ENCODE measurements at regions of chr1 and their contacts with region 1.

Region 1: GRCh38 chr1:205255941-205256780 is 28.4 kb downstream of the TMCC2 start:
- DNase-seq: peak; percentile 95
- H3K4me3 Mint-ChIP-seq: no peak overlapping the region
- H3K27ac Mint-ChIP-seq: no peak overlapping the region
- H3K4me1 Mint-ChIP-seq: peaks cover 31% of the 10 kb centered on the region
- H3K27me3 Mint-ChIP-seq: no peaks in the 10 kb centered on the region
- CTCF ChIP-seq: peak; percentile 100

Region 2: GRCh38 chr1:204565617-204566582 is 690.3 kb before region 1 on chr1:
- CTCF ChIA-PET with region 1: no interaction called
- POLR2A ChIA-PET with region 1: no interaction called
- intact Hi-C with region 1: loop called (anchors 10 kb)
- DNase-seq: peak; percentile 91
- H3K4me3 Mint-ChIP-seq: no peak overlapping the region
- H3K27ac Mint-ChIP-seq: no peak overlapping the region
- H3K4me1 Mint-ChIP-seq: peaks cover 9% of the 10 kb centered on the region
- H3K27me3 Mint-ChIP-seq: no peaks in the 10 kb centered on the region
- CTCF ChIP-seq: peak; percentile 95

Region 3: DNA sequence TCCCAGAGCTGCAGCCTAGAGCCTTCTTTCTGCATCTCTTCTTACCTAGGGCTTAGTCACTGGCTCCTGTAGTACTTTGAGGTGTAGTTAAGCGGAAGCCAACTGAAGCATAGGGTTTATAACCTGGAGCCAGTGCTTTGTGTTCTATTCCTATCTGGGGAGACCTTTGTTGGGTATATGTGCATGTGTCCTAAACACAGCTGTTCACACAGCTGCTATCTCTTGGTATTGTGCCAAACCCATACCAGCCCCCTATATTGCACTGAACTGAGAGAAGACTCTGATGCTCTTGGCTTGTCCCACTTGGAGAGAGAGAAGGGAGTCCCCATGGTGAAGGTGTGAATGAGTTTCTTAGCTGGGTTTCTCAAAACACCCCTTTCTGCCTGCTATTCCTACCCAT is 402.7 kb before region 1 on chr1:
- CTCF ChIA-PET with region 1: no interaction called
- POLR2A ChIA-PET with region 1: no interaction called
- intact Hi-C with region 1: no loop called
- DNase-seq: no peak
- H3K4me3 Mint-ChIP-seq: no peak overlapping the region
- H3K27ac Mint-ChIP-seq: no peak overlapping the region
- H3K4me1 Mint-ChIP-seq: no peaks in the 10 kb centered on the region
- H3K27me3 Mint-ChIP-seq: peaks cover 69% of the 10 kb centered on the region
- CTCF ChIP-seq: no peak

Region 4: DNA sequence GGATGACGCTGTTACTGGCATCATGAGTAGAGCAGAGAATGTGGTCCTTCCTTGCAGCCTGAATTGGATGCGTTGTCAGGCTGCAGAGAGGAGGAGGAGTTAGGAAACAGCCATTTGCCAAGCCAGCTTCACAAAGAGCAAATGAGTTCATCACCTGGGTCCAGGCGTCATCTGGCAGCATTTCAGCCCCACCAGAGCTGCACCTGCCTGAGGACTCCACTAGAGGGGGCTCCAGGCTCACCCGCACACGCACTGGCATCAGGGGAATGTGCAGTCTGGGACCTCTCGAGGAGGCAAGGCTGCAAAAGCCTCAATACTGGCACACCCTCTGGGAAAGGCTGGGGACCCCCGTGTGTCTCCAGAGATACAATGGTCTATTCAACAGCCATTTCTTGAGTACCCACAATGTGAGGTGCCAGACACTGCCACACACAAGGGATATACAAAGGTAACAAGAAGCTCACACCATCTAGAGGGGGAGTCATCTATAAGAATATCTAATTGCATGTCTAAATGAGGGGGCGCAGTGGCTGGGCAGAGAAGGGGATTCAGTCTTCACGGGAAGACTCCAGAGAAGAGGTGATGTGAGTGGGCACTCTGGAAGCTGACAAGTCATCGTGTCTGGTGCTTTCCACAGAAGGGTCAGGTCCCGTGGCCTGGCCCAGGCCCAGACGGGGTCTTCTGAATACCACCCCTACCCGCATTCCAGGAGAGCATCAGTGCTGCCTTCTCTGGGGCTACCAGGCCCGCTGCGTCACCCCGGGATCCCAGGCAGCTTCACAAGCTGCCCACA is 266.7 kb before region 1 on chr1:
- CTCF ChIA-PET with region 1: interaction called, 99 read pairs
- POLR2A ChIA-PET with region 1: interaction called, 5 read pairs
- intact Hi-C with region 1: loop called (anchors 1 kb)
- DNase-seq: peak; percentile 91
- H3K4me3 Mint-ChIP-seq: no peak overlapping the region
- H3K27ac Mint-ChIP-seq: no peak overlapping the region
- H3K4me1 Mint-ChIP-seq: no peaks in the 10 kb centered on the region
- H3K27me3 Mint-ChIP-seq: peaks cover 99% of the 10 kb centered on the region
- CTCF ChIP-seq: peak; percentile 100

Region 5: DNA sequence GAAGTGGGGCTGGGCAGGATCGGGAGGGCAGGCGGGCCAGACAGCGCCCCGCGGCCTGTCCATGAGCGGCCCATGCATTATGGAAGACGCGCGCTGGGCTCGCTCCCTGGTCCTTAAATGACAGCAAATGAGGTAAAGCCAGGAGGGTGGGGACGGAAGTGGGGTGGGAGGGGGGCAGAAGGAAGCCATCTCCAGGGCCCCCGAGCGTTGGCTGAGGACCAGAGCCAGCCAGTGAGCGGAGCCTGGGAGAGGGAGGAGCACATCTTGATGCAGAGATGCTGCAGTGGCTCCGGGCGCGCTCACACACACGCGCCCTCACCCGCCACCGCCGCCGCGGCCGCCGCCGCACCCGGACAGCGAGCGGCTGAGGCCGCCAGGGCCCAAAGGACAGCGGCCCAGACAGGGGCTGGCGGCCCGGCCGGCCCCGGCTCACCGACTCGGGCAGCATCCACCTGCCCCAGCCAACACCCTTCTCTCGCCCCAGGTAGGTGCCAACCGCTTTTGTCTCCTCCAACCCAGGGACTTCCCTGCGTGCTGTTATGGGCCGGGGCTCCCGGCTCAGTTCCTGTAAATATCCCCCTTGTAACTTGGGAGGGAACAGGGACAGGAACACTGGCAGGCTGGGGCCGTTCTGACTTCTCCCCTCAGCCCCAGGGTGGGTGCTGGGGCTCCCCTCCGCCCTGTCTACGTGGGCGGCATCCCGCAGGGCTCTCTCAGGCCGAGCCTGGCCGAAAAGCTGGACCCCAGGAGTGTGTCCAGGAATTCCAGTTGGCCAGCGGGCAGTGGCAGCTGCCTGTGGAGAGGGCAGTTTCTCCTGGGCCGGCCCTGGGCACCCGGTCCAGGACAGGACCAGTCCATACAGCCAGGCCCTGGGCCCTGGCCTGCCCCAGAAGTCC is 213.0 kb before region 1 on chr1 and contains the start of gene CNTN2:
- CTCF ChIA-PET with region 1: no interaction called
- POLR2A ChIA-PET with region 1: no interaction called
- intact Hi-C with region 1: no loop called
- DNase-seq: no peak
- H3K4me3 Mint-ChIP-seq: no peak within 1 kb of the TSS
- H3K27ac Mint-ChIP-seq: no peak within 1 kb of the TSS
- H3K4me1 Mint-ChIP-seq: no peaks in the 10 kb centered on the region
- H3K27me3 Mint-ChIP-seq: peaks cover 84% of the 10 kb centered on the region
- CTCF ChIP-seq: no peak
- total RNA-seq, gene CNTN2: 0.05 TPM in 1 of 2 replicates, not detected in the other

Region 6: DNA sequence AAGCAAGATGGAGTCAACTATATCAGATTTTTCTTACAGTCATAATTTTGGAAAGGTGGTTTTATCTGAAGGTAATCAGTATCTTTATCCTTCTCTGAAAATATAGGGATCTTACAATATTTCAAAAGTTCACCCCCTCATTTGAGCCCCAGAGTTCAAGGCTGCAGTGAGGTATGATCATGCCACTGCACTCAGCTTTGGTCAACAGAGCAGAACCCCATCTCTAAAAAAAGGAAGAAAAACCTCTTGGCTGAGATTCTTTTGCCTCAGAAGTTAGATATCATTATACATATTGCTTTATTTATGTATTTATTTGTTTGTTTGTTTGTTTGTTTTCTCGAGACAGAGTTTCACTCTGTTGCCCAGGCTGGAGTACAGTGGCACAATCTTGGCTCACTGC is 122.9 kb before region 1 on chr1:
- CTCF ChIA-PET with region 1: interaction called, 19 read pairs
- POLR2A ChIA-PET with region 1: interaction called, 3 read pairs
- intact Hi-C with region 1: no loop called
- DNase-seq: no peak
- H3K4me3 Mint-ChIP-seq: no peak overlapping the region
- H3K27ac Mint-ChIP-seq: no peak overlapping the region
- H3K4me1 Mint-ChIP-seq: no peaks in the 10 kb centered on the region
- H3K27me3 Mint-ChIP-seq: no peaks in the 10 kb centered on the region
- CTCF ChIP-seq: no peak

Region 7: GRCh38 chr1:205217418-205217817 is 38.7 kb before region 1 on chr1:
- CTCF ChIA-PET with region 1: interaction called, 25 read pairs
- POLR2A ChIA-PET with region 1: no interaction called
- intact Hi-C with region 1: no loop called
- DNase-seq: no peak
- H3K4me3 Mint-ChIP-seq: no peak overlapping the region
- H3K27ac Mint-ChIP-seq: no peak overlapping the region
- H3K4me1 Mint-ChIP-seq: no peaks in the 10 kb centered on the region
- H3K27me3 Mint-ChIP-seq: peaks cover 12% of the 10 kb centered on the region
- CTCF ChIP-seq: no peak

Region 8: DNA sequence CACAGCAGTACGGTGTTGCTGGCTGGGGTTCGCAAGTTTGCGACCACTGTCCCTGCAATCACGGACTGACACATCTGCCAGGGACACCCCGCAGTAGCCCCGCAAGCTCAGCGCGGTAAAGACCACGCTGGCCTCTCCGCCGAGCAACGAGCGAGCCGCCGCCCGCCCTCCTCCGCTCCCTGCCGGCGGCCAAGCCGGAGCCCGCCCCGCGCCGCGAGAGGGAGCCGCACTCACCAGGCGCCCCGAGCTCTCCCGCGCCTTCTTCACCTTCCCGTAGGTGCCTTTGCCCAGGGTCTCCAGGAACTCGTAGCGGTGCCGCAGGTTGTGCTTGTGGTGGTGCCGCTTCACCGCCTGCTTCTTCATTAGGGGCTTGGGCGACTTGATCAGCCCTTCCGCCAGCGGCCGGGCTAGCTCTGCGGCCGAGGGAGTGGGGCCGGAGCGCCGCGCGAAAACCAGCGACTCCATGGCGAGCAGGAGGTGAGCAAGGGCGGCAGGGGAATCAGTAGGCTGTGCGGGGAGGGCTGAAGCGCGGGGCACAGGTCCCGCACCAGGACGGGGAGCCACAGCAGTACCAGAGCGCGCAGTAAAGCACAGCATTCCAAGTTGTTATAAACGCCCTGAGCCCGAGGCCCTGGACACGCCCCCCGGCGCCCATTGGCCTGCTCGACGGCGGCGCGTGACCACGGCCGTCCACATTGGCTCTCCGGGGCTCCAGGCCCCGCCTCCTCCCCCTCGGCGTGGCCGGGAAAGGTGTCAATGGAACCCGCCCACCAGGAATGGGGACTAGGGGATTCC is 65.2 kb after region 1 on chr1 and contains the start of gene NUAK2:
- CTCF ChIA-PET with region 1: interaction called, 127 read pairs
- POLR2A ChIA-PET with region 1: interaction called, 7 read pairs
- intact Hi-C with region 1: no loop called
- DNase-seq: peak; percentile 97
- H3K4me3 Mint-ChIP-seq: peak within 1 kb of the TSS; percentile 99
- H3K27ac Mint-ChIP-seq: peak within 1 kb of the TSS; percentile 54
- H3K4me1 Mint-ChIP-seq: peaks cover 56% of the 10 kb centered on the region
- H3K27me3 Mint-ChIP-seq: no peaks in the 10 kb centered on the region
- CTCF ChIP-seq: peak; percentile 64
- total RNA-seq, gene NUAK2: 2.8 and 6.0 TPM in 2 replicates